Right ventricle myocardium inferior (tissue), 1 donor: ENCODE measurements at regions of chr1 and their contacts with region 1.

Region 1: GRCh38 chr1:62068978-62069377 is 125.7 kb upstream of the L1TD1 start:
- DNase-seq: no peak
- ATAC-seq: peak; percentile 93

Region 2: GRCh38 chr1:61741711-61742619 is 327.0 kb before region 1 on chr1 and contains the start of gene PATJ:
- intact Hi-C with region 1: loop called (anchors 2 kb)
- DNase-seq: peak; percentile 68
- ATAC-seq: peak; percentile 76
- total RNA-seq, gene PATJ: 121 TPM

Region 3: GRCh38 chr1:61887076-61887867 is 181.7 kb before region 1 on chr1:
- intact Hi-C with region 1: loop called (anchors 5 kb)
- DNase-seq: no peak
- ATAC-seq: peak; percentile 71

Region 4: DNA sequence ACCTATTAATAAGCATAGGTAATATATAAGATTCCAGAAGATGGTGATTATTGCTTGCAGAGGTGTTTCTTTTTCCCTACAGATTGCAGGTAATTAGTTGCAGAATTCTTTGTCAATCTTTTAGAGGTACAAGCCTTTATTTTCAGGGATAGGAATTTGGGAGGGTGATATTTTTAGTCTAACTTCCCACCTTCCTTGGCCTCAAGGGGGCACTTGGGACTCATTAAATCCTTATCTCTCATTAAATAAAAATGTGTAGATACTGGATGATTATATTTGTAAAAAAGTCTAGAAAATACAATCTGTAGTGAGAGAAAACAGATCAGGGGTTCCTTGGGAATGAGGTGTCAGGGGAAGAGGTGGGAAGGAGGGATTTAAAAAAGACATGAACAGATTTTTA is 147.5 kb before region 1 on chr1:
- intact Hi-C with region 1: no loop called
- DNase-seq: no peak
- ATAC-seq: no peak

Region 5: GRCh38 chr1:61950418-61950817 is 118.6 kb before region 1 on chr1:
- intact Hi-C with region 1: loop called (anchors 1 kb)
- DNase-seq: no peak
- ATAC-seq: no peak

Region 6: GRCh38 chr1:61973100-61973837 is 95.7 kb before region 1 on chr1:
- intact Hi-C with region 1: loop called (anchors 5 kb)
- DNase-seq: no peak
- ATAC-seq: peak; percentile 56